MCF 10A (cell line): ENCODE measurements at regions of chr20 and their contacts with region 1.

Region 1: GRCh38 chr20:20027284-20027683 is 10.1 kb downstream of the NAA20 start:
- DNase-seq: no peak
- H3K4me3 Mint-ChIP-seq: no peak overlapping the region
- H3K27ac Mint-ChIP-seq: peak overlapping the region; percentile 12
- H3K4me1 Mint-ChIP-seq: no peaks in the 10 kb centered on the region
- H3K27me3 Mint-ChIP-seq: no peaks in the 10 kb centered on the region
- CTCF ChIP-seq: no peak

Region 2: DNA sequence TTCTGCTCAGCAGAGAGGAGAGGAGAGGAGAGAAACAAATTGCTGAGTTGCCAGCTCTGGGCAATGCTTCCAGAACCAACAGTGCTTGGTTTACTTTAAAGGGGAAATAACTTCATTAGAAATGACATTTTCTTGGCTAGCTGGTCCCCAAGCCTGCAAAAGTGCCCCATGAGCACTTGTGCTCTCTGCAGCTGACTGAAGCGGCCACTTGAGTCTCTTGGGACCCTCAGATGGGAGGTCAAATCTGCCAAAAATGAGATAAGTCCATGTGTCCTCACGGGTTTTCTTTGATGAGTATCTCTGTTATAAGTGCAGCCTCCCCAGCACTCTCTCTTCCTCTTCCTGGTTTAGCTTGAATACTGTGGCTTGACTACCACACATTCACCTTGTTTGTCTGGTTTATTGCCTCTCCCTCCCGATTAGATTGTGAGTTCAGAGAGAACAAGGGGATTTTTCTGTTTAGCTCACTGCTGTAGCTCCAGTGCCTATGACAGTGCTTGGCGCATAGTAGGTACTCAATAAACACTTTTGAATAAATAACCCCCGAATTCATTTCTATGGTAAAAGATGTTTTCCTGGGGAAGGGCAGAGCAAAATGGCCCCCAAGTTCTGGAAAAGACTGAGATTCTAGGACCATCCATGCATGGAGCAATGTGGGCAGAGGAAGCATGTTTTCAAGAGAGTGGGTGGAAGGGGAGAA is 276.2 kb before region 1 on chr20:
- CTCF ChIA-PET with region 1: no interaction called
- POLR2A ChIA-PET with region 1: no interaction called
- intact Hi-C with region 1: no loop called
- DNase-seq: no peak
- H3K4me3 Mint-ChIP-seq: no peak overlapping the region
- H3K27ac Mint-ChIP-seq: no peak overlapping the region
- H3K4me1 Mint-ChIP-seq: peaks cover 11% of the 10 kb centered on the region
- H3K27me3 Mint-ChIP-seq: no peaks in the 10 kb centered on the region
- CTCF ChIP-seq: no peak

Region 3: DNA sequence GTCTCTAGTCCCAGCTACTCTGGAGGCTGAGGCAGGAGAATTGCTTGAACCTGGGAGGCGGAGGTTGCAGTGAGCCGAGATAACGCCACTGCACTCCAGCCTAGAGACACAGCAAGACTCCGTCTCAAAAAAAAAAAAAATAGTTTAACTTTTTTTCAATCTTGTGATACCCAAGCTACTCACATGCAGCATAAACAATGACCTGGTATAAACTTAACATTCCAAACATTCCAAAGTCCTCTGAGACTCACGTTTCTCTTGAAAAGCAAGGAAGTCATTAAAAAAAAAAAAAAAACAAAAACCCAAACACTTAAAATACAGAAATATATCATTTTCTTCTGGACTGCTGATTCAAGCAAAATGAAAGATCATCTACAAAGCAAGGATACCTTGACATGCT is 10.7 kb after region 1 on chr20:
- CTCF ChIA-PET with region 1: no interaction called
- POLR2A ChIA-PET with region 1: interaction called, 43 read pairs
- intact Hi-C with region 1: no loop called
- DNase-seq: no peak
- H3K4me3 Mint-ChIP-seq: no peak overlapping the region
- H3K27ac Mint-ChIP-seq: no peak overlapping the region
- H3K4me1 Mint-ChIP-seq: peaks cover 5% of the 10 kb centered on the region
- H3K27me3 Mint-ChIP-seq: no peaks in the 10 kb centered on the region
- CTCF ChIP-seq: no peak

Region 4: GRCh38 chr20:20304942-20305341 is 277.7 kb after region 1 on chr20:
- CTCF ChIA-PET with region 1: no interaction called
- POLR2A ChIA-PET with region 1: no interaction called
- intact Hi-C with region 1: no loop called
- DNase-seq: no peak
- H3K4me3 Mint-ChIP-seq: no peak overlapping the region
- H3K27ac Mint-ChIP-seq: no peak overlapping the region
- H3K4me1 Mint-ChIP-seq: no peaks in the 10 kb centered on the region
- H3K27me3 Mint-ChIP-seq: no peaks in the 10 kb centered on the region
- CTCF ChIP-seq: no peak